ENCODE measurements at regions of chr7 and their contacts with region 1.

Region 1: GRCh38 chr7:92731335-92732063 is 104.9 kb downstream of the CDK6 start:
- DNase-seq: no peak
- H3K4me3 Mint-ChIP-seq: peak overlapping the region; percentile 34
- H3K27ac Mint-ChIP-seq: peak overlapping the region; percentile 96
- H3K4me1 Mint-ChIP-seq: peaks cover 74% of the 10 kb centered on the region
- H3K27me3 Mint-ChIP-seq: no peaks in the 10 kb centered on the region

Region 2: DNA sequence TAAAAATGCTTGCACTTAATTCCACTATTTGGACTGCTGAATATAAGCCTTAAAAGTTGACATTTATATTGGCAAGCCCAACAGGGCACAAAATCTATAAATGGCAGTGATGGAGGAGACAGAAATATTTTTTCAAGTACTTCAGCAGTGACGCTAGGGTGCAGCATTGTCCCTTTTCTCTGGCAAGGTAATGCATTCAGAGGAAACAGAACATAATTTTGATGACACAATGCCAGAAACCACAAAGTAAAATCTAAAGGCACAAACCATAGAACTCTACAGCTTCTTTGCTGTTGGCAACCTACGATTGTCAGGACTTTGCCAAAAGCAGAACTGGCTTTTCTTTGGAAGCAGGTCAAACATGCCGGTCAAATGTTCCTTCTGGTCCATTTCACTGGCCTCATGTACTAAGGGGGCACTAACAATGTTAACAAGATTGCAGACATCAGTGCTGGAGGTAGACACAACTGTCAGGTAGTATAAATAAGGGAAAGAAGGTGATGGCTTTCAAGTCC is 110.4 kb before region 1 on chr7:
- intact Hi-C with region 1: loop called (anchors 1 kb)
- DNase-seq: peak; percentile 73
- H3K4me3 Mint-ChIP-seq: peak overlapping the region; percentile 37
- H3K27ac Mint-ChIP-seq: peak overlapping the region; percentile 87
- H3K4me1 Mint-ChIP-seq: peaks cover 57% of the 10 kb centered on the region
- H3K27me3 Mint-ChIP-seq: no peaks in the 10 kb centered on the region

Region 3: GRCh38 chr7:92669616-92670165 is 61.8 kb before region 1 on chr7:
- intact Hi-C with region 1: loop called (anchors 1 kb)
- DNase-seq: no peak
- H3K4me3 Mint-ChIP-seq: no peak overlapping the region
- H3K27ac Mint-ChIP-seq: peak overlapping the region; percentile 18
- H3K4me1 Mint-ChIP-seq: peaks cover 70% of the 10 kb centered on the region
- H3K27me3 Mint-ChIP-seq: no peaks in the 10 kb centered on the region

Region 4: GRCh38 chr7:92708111-92709042 is 23.1 kb before region 1 on chr7:
- intact Hi-C with region 1: loop called (anchors 1 kb)
- DNase-seq: no peak
- H3K4me3 Mint-ChIP-seq: no peak overlapping the region
- H3K27ac Mint-ChIP-seq: peak overlapping the region; percentile 64
- H3K4me1 Mint-ChIP-seq: peaks cover 43% of the 10 kb centered on the region
- H3K27me3 Mint-ChIP-seq: no peaks in the 10 kb centered on the region

Region 5: GRCh38 chr7:92751902-92752901 is 20.7 kb after region 1 on chr7:
- intact Hi-C with region 1: loop called (anchors 1 kb)
- DNase-seq: no peak
- H3K4me3 Mint-ChIP-seq: no peak overlapping the region
- H3K27ac Mint-ChIP-seq: peak overlapping the region; percentile 76
- H3K4me1 Mint-ChIP-seq: peaks cover 62% of the 10 kb centered on the region
- H3K27me3 Mint-ChIP-seq: no peaks in the 10 kb centered on the region

Region 6: DNA sequence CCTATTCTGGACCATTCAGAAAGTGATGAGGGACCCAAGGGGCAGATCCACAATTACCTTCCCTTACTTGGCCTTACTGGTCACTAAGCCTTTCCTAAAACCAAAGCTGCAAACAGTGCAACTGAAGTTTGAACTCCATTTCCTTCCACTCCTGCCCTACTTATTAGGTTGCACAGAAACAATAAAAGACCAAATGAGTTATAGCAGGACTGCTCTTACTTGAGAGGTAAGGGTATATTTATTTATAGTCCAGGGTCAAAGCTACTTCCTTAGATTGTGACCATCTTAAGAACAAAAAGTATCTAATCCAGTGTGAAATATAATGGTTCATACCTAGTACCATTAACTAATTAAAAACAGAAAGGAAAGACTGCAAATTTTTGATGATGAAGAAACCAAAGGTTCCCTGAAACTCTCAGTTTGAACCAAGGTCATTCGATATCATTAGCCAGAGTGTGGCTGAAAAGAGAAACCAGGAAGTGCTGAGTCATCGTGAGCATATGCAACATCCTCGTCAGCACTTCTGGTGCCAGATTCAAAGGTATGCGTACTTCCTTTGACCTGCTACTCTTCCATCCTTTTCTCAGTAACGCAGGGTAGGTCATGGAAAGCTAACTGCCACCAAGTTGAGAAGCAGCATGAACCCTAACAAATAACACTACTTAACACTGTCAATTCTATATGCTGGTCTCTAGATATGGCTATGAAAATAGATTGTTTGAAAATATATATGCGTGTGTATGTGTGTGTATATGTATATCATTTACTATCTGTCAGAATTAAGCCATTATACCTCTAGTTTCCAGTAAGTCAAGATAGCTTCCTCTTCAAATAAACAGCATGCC is 78.1 kb after region 1 on chr7:
- intact Hi-C with region 1: loop called (anchors 1 kb)
- DNase-seq: peak; percentile 71
- H3K4me3 Mint-ChIP-seq: peak overlapping the region; percentile 61
- H3K27ac Mint-ChIP-seq: peak overlapping the region; percentile 91
- H3K4me1 Mint-ChIP-seq: peaks cover 71% of the 10 kb centered on the region
- H3K27me3 Mint-ChIP-seq: no peaks in the 10 kb centered on the region

Measured in activated T-helper 2 cell treated with anti-CD3 and anti-CD28 coated beads, Interferon-gamma antibody, Interleukin-2, Interleukin-4, amounts not matched to agents 10 μg/mL and 5 μg/mL and 100 μg/mL, durations not matched to agents 14 hours and 24 hours and 36 hours (primary cell).